Activated B cell treated with CpG ODN at 0.5 μM for 24 hours (primary cell): ENCODE measurements at regions of chr3 and their contacts with region 1.

Region 1: DNA sequence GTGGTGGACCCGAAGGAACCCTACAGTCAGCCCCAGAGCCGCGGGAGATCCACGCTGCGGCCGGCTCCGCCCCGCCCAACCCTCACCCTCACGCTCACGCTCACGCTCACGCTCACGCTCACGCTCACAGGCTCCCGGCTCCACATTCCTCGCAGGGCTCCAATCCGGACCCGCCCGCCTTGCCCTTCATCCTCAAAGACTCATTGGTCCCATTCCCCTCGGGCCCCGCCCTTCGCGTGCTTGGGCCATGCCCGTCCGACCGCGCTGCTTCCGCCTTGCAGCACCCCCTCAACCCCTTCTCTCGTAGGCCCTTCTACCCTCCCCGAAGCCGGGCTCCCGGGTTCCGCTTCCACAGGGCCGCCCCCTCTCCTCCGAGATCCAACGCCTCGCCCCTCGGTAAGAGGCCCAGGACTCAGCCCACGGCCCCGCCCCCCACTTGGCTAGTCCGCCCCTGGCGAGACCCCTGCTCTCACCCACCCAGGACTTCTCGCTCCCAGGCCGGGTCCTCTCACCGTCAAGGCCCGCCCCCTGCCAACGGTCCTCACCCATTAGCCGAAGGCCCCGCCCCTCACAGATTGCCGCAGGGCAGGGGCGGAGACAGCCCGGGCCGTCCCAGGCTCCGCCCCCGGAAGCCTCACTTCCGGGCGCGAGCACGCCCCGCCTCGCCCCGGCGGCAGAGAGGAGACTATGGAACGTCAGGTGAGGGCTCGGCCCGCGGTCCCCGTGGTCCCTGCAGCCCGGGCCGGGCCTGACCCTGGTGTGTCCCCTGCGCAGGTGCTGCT is at the start of gene APEH:
- DNase-seq: peak; percentile 98
- ATAC-seq: peak; percentile 88
- H3K4me3 Mint-ChIP-seq: peak within 1 kb of the TSS; percentile 91
- H3K27ac Mint-ChIP-seq: peak within 1 kb of the TSS; percentile 98
- H3K4me1 Mint-ChIP-seq: peaks cover 22% of the 10 kb centered on the region
- H3K27me3 Mint-ChIP-seq: no peaks in the 10 kb centered on the region
- CTCF ChIP-seq: no peak
- total RNA-seq, gene APEH: 109 and 113 TPM in 2 replicates

Region 2: GRCh38 chr3:49165771-49166751 is 507.8 kb before region 1 on chr3 and contains the start of gene CCDC71:
- CTCF ChIA-PET with region 1: no interaction called
- POLR2A ChIA-PET with region 1: no interaction called
- intact Hi-C with region 1: loop called (anchors 1 kb)
- DNase-seq: peak; percentile 74
- ATAC-seq: peak; percentile 83
- H3K4me3 Mint-ChIP-seq: peak within 1 kb of the TSS; percentile 92
- H3K27ac Mint-ChIP-seq: peak within 1 kb of the TSS; percentile 84
- H3K4me1 Mint-ChIP-seq: peaks cover 26% of the 10 kb centered on the region
- H3K27me3 Mint-ChIP-seq: peaks cover 2% of the 10 kb centered on the region
- CTCF ChIP-seq: no peak
- total RNA-seq, gene CCDC71: 28.3 and 28.9 TPM in 2 replicates

Region 3: GRCh38 chr3:49539659-49540560 is 134.0 kb before region 1 on chr3:
- CTCF ChIA-PET with region 1: interaction called, 86 read pairs
- POLR2A ChIA-PET with region 1: interaction called, 17 read pairs
- intact Hi-C with region 1: loop called (anchors 1 kb)
- DNase-seq: peak; percentile 93
- ATAC-seq: peak; percentile 92
- H3K4me3 Mint-ChIP-seq: peak overlapping the region; percentile 79
- H3K27ac Mint-ChIP-seq: peak overlapping the region; percentile 46
- H3K4me1 Mint-ChIP-seq: peaks cover 9% of the 10 kb centered on the region
- H3K27me3 Mint-ChIP-seq: peaks cover 11% of the 10 kb centered on the region
- CTCF ChIP-seq: no peak

Region 4: GRCh38 chr3:49786241-49786958 is 112.5 kb after region 1 on chr3 and contains the start of gene IP6K1:
- CTCF ChIA-PET with region 1: no interaction called
- POLR2A ChIA-PET with region 1: no interaction called
- intact Hi-C with region 1: loop called (anchors 1 kb)
- DNase-seq: peak; percentile 97
- ATAC-seq: peak; percentile 99
- H3K4me3 Mint-ChIP-seq: peak within 1 kb of the TSS; percentile 91
- H3K27ac Mint-ChIP-seq: peak within 1 kb of the TSS; percentile 93
- H3K4me1 Mint-ChIP-seq: peaks cover 32% of the 10 kb centered on the region
- H3K27me3 Mint-ChIP-seq: no peaks in the 10 kb centered on the region
- CTCF ChIP-seq: no peak
- total RNA-seq, gene IP6K1: 44.3 and 47.6 TPM in 2 replicates

Region 5: GRCh38 chr3:50298836-50299637 is 625.1 kb after region 1 on chr3 and contains the starts of genes HYAL3 and NAA80:
- CTCF ChIA-PET with region 1: no interaction called
- POLR2A ChIA-PET with region 1: no interaction called
- intact Hi-C with region 1: loop called (anchors 5 kb)
- DNase-seq: peak; percentile 98
- ATAC-seq: peak; percentile 89
- H3K4me3 Mint-ChIP-seq: peak within 1 kb of the TSS; percentile 98
- H3K27ac Mint-ChIP-seq: peak within 1 kb of the TSS; percentile 98
- H3K4me1 Mint-ChIP-seq: peaks cover 30% of the 10 kb centered on the region
- H3K27me3 Mint-ChIP-seq: no peaks in the 10 kb centered on the region
- CTCF ChIP-seq: no peak
- total RNA-seq, gene HYAL3: 2.0 and 2.5 TPM in 2 replicates
- total RNA-seq, gene NAA80: 23.9 and 24.8 TPM in 2 replicates